ENCODE measurements at regions of chr7 and their contacts with region 1.

Region 1: DNA sequence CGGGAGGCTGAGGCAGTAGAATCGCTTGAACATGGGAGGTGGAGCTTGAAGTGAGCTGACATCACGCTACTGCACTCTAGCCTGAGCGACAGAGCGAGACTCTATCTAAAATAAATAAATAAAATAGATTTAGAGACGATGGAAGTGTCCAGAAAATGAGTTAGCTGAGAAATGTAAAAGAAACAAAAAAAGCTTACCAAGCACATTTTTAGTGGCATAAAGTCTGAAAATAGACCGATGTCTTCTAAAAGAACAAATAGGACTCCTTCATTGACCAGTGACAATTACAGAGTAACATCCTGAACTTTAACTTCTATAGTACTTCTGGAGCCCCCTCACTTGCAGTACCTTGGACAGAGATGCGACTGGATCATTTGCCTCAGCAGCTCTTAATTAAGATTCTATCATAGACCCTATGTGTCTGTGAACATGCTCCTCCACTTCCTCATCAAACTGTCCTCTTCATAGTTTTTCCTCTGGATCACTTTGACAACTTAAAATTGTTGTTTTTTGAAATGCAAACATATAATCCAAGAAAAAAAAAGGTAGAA is 25.2 kb upstream of the SRPK2 start:
- DNase-seq: no peak
- ATAC-seq: no peak
- H3K4me3 ChIP-seq: no peak overlapping the region
- H3K4me3 Mint-ChIP-seq: no peak overlapping the region
- H3K27ac ChIP-seq: no peak overlapping the region
- H3K27ac Mint-ChIP-seq: no peak overlapping the region
- H3K4me1 ChIP-seq: no peaks in the 10 kb centered on the region
- H3K4me1 Mint-ChIP-seq: peaks cover 2 to 10% (median 3%) of the 10 kb centered on the region in 3 donors
- H3K27me3 ChIP-seq: no peaks in the 10 kb centered on the region
- H3K27me3 Mint-ChIP-seq: no peaks in the 10 kb centered on the region

Region 2: DNA sequence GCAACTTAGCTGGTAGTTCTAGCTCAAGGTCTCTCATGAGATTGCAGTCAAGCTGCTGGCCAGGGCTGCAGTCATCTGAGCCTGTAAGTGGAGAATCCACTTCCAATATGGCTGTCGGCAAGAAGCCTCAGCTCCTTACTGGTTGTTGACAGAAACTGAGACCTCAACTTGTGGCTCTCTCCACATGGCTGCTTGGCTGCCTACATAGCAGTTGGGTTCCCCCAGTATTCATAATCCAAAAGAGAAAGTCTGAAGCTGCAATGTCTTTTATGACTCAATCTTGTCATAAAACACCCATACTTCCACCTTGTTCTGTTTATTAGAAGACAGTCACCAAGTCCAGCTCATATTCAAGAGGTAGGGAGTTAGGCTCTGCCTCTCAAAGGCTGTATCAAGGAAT is 734.9 kb before region 1 on chr7:
- CTCF ChIA-PET with region 1: no interaction called
- POLR2A ChIA-PET with region 1: no interaction called
- DNase-seq: no peak
- ATAC-seq: no peak
- H3K4me3 ChIP-seq: no peak overlapping the region
- H3K4me3 Mint-ChIP-seq: no peak overlapping the region
- H3K27ac ChIP-seq: no peak overlapping the region
- H3K27ac Mint-ChIP-seq: no peak overlapping the region
- H3K4me1 ChIP-seq: no peaks in the 10 kb centered on the region
- H3K4me1 Mint-ChIP-seq: no peaks in the 10 kb centered on the region
- H3K27me3 ChIP-seq: no peaks in the 10 kb centered on the region
- H3K27me3 Mint-ChIP-seq: peaks cover 9 to 14% of the 10 kb centered on the region in 2 donors

Region 3: GRCh38 chr7:105336009-105336408 is 78.0 kb before region 1 on chr7:
- CTCF ChIA-PET with region 1: no interaction called
- POLR2A ChIA-PET with region 1: no interaction called
- DNase-seq: peak in 1 of 35 experiments; percentile 43
- ATAC-seq: no peak
- H3K4me3 ChIP-seq: no peak overlapping the region
- H3K4me3 Mint-ChIP-seq: no peak overlapping the region
- H3K27ac ChIP-seq: no peak overlapping the region
- H3K27ac Mint-ChIP-seq: no peak overlapping the region
- H3K4me1 ChIP-seq: peaks cover 0 to 12% of the 10 kb centered on the region in 2 experiments
- H3K4me1 Mint-ChIP-seq: peaks cover 32 to 39% (median 32%) of the 10 kb centered on the region in 3 donors
- H3K27me3 ChIP-seq: no peaks in the 10 kb centered on the region
- H3K27me3 Mint-ChIP-seq: no peaks in the 10 kb centered on the region

Region 4: DNA sequence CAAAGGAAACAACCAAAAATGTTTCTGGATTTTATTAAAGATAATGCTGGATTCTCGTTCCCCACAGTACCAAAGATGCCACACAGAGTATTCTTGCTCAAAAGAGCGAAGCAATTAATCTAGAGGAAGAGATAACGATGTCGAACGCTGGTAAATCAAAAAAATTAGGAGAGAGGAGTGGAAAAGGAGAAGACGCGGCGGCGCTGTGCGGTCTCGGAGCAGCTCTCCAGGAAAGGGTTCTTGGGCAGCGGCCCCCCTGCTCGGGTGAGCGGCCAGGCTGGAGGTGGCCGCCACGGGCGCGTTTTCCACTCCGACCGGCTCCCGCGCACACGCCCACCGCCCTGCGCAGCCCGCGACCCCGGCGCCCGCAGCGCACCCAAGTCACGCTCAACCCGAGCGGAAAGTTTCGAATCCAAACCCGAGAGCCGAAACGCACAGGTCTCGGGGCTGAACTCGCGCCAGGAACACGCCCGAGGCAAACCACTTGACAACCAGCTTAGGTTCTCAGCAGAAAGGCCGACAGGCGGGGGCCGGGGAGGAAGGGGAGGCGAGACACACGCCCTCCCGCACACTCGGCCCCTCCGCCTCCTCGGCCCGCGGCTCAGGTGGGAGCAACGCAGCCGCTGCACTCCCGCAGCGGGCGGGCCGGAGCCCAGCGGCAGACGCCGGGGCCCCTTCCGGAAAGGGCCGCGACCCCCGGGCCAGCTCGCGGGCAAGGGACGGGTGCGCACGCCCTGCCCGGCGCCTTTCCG is 26.2 kb before region 1 on chr7:
- CTCF ChIA-PET with region 1: no interaction called
- POLR2A ChIA-PET with region 1: interaction called in 1 of 2 experiments, 10 read pairs
- DNase-seq: peak; percentile 12 to 64 (median 38)
- ATAC-seq: peak; percentile 43 to 50 (median 44)
- H3K4me3 ChIP-seq: peak overlapping the region; percentile 67 to 87
- H3K4me3 Mint-ChIP-seq: peak overlapping the region; percentile 85 to 93 (median 90)
- H3K27ac ChIP-seq: no peak overlapping the region
- H3K27ac Mint-ChIP-seq: peak overlapping the region; percentile 83 to 84
- H3K4me1 ChIP-seq: peaks cover 8 to 11% of the 10 kb centered on the region in 2 experiments
- H3K4me1 Mint-ChIP-seq: peaks cover 38 to 45% (median 41%) of the 10 kb centered on the region in 3 donors
- H3K27me3 ChIP-seq: no peaks in the 10 kb centered on the region
- H3K27me3 Mint-ChIP-seq: no peaks in the 10 kb centered on the region